ENCODE measurements at regions of chr1 and their contacts with region 1.

Region 1: DNA sequence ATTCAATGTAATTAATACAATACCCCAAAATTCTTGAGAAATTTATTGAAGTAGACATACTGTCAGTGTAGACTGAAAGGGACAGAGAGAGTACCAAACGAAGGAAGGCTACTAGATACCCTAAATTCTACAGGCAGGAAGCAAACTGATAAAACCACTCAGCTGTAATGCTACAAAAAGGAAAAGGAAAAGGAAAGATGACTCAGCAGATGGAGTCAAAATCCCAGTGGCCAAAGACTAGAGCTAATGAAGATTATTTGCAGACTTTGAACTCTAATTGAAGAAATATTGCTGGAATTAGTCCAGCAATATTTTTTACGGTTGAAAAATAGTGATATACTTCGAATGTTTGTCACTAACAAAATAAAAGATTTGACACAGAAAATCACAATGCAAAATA is 671.9 kb downstream of the BRINP3 start:
- DNase-seq: no peak
- H3K4me3 ChIP-seq: no peak overlapping the region
- H3K27ac ChIP-seq: no peak overlapping the region
- H3K4me1 ChIP-seq: no peaks in the 10 kb centered on the region
- H3K27me3 ChIP-seq: no peaks in the 10 kb centered on the region
- CTCF ChIP-seq: no peak

Region 2: GRCh38 chr1:189619682-189620332 is 185.9 kb before region 1 on chr1:
- intact Hi-C with region 1: loop called (anchors 5 kb)
- DNase-seq: no peak
- H3K4me3 ChIP-seq: no peak overlapping the region
- H3K27ac ChIP-seq: no peak overlapping the region
- H3K4me1 ChIP-seq: no peaks in the 10 kb centered on the region
- H3K27me3 ChIP-seq: no peaks in the 10 kb centered on the region
- CTCF ChIP-seq: no peak

Region 3: GRCh38 chr1:189769448-189769847 is 36.3 kb before region 1 on chr1:
- intact Hi-C with region 1: no loop called
- DNase-seq: no peak
- H3K4me3 ChIP-seq: no peak overlapping the region
- H3K27ac ChIP-seq: no peak overlapping the region
- H3K4me1 ChIP-seq: no peaks in the 10 kb centered on the region
- H3K27me3 ChIP-seq: no peaks in the 10 kb centered on the region
- CTCF ChIP-seq: no peak